Activated naive CD4-positive, alpha-beta T cell treated with anti-CD3 and anti-CD28 coated beads for 36 hours (primary cell): ENCODE measurements at regions of chr19 and their contacts with region 1.

Region 1: GRCh38 chr19:35213663-35214632 is 14.6 kb downstream of the FAM187B start:
- DNase-seq: peak; percentile 92
- H3K4me3 Mint-ChIP-seq: no peak overlapping the region
- H3K27ac Mint-ChIP-seq: peak overlapping the region; percentile 97
- H3K4me1 Mint-ChIP-seq: peaks cover 58% of the 10 kb centered on the region
- H3K27me3 Mint-ChIP-seq: no peaks in the 10 kb centered on the region

Region 2: DNA sequence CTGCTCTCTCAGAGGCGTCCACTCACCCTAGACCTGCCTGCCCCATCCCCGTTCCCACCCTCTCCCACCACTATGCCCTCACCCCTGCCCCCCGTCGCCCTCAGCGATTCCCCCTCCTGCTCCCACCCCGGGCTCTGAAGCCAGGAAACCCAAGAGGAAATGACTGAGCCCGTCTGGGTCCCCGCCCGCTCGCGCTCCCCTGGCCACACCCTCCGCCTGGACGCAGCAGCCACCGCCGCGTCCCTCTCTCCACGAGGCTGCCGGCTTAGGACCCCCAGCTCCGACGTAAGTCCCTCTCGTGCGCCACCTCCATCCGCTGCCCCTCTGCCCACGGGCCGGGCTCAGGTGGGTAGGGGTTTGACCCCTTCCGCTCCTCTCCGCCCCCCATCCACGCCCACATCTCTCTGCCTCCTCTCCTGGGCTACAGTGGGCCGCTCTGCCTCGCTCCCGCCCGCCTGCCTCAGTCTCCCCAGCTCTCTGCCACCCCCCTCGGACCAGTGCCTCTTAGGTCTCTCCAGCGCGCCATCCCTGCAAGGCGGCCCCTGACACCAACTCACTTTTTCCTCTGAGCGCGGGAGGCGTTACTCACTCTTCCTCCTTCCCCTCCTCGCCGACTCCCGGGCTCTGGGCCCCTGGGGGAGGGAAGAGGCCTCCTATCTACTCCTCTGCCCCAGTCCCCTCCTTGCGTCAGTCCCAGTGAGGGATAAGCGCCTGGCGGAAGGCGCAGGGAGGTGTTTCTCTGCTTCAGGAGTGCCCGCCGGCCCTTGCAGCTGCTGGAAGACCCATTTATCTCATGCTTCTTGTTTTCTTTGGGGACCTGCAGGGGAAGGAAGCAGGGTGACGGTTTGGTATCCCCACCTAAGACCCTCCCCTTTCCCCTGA is 59.2 kb before region 1 on chr19 and contains the start of gene FXYD5:
- CTCF ChIA-PET with region 1: interaction called, 6 read pairs
- intact Hi-C with region 1: loop called (anchors 1 kb)
- DNase-seq: peak; percentile 93
- H3K4me3 Mint-ChIP-seq: peak within 1 kb of the TSS; percentile 98
- H3K27ac Mint-ChIP-seq: peak within 1 kb of the TSS; percentile 99
- H3K4me1 Mint-ChIP-seq: peaks cover 47% of the 10 kb centered on the region
- H3K27me3 Mint-ChIP-seq: no peaks in the 10 kb centered on the region
- total RNA-seq, gene FXYD5: 289 to 294 TPM

Region 3: DNA sequence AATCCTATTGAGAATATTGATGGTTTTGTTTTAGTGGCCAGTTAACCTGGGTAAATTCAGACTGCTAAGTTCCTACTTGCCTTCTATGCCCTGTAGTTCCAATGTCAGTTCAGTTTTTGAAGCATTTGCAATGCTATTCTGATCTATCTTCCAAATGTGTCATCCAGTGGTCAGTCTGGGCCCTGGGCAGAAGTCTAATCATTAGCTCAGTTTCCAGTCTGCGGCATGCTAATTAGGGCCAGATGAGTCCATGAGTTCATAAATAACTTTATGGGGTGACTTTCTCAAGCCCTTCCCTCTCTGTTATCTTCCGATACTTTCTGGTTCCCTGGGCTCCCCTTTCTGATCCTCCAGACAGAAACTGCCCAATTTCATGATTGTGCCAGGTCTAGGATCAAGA is 18.1 kb before region 1 on chr19:
- CTCF ChIA-PET with region 1: interaction called, 4 read pairs
- intact Hi-C with region 1: loop called (anchors 2 kb)
- DNase-seq: no peak
- H3K4me3 Mint-ChIP-seq: no peak overlapping the region
- H3K27ac Mint-ChIP-seq: no peak overlapping the region
- H3K4me1 Mint-ChIP-seq: peaks cover 13% of the 10 kb centered on the region
- H3K27me3 Mint-ChIP-seq: no peaks in the 10 kb centered on the region

Region 4: GRCh38 chr19:35247526-35248306 is 33.8 kb after region 1 on chr19:
- CTCF ChIA-PET with region 1: interaction called, 4 read pairs
- intact Hi-C with region 1: loop called (anchors 5 kb)
- DNase-seq: peak; percentile 76
- H3K4me3 Mint-ChIP-seq: peak overlapping the region; percentile 86
- H3K27ac Mint-ChIP-seq: peak overlapping the region; percentile 90
- H3K4me1 Mint-ChIP-seq: peaks cover 13% of the 10 kb centered on the region
- H3K27me3 Mint-ChIP-seq: no peaks in the 10 kb centered on the region

Region 5: DNA sequence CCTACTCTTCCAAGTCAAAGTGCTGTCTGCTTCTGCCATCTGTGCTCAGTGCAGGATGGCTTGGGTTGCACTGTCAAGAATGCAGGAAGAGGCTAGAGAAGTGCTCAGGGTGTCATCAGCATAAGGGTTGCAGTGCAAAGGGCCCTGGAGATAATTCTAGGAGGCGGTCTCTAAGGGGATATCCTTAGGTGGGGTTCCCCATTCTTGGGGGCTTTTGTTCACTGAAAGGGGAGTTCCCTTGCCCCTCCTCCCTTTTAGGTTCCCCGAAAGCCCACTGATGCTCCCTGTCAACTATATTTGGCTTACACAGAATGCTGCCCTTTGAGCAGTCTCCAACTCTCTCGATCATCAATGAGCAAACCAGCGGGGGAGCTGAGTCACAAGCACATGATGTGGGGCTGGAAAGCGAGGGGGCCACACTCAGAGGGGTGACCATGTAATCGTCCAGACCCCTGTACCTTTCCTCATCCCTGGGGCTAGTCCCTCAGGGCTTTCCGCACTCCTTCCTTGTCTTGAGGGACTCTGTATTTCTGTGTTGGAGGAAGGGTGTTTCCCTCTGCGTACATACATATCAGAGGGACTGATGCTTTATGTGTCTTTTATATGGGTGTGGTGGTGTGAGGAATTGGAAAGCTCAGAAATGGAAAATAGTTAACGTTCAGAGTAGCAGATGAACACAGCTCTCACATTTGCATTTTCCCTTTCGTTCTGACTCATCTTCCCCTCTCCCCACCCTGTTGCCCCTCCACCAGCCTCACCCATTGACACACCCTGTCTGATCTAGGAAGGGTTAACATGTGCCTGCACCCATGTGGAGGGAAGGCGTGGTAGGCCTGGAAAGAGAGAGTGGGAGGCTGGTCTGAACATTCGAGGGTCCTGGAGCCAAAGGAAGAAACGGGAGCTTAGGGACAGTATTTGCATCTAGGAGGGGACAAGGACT is 497.1 kb after region 1 on chr19:
- CTCF ChIA-PET with region 1: no interaction called
- intact Hi-C with region 1: loop called (anchors 5 kb)
- DNase-seq: peak; percentile 87
- H3K4me3 Mint-ChIP-seq: peak overlapping the region; percentile 52
- H3K27ac Mint-ChIP-seq: peak overlapping the region; percentile 100
- H3K4me1 Mint-ChIP-seq: peaks cover 44% of the 10 kb centered on the region
- H3K27me3 Mint-ChIP-seq: no peaks in the 10 kb centered on the region